Posterior vena cava (tissue), 2 donors: ENCODE measurements at regions of chr1 and their contacts with region 1.

Region 1: GRCh38 chr1:246032031-246032551 is 475.0 kb downstream of the SMYD3 start:
- DNase-seq: no peak

Region 2: GRCh38 chr1:246170574-246171261 is 138.6 kb after region 1 on chr1:
- intact Hi-C with region 1: loop called in 1 of 2 experiments (anchors 5 kb)
- DNase-seq: no peak